Heart right ventricle (tissue), 16 donors: ENCODE measurements at regions of chr5 and their contacts with region 1.

Region 1: DNA sequence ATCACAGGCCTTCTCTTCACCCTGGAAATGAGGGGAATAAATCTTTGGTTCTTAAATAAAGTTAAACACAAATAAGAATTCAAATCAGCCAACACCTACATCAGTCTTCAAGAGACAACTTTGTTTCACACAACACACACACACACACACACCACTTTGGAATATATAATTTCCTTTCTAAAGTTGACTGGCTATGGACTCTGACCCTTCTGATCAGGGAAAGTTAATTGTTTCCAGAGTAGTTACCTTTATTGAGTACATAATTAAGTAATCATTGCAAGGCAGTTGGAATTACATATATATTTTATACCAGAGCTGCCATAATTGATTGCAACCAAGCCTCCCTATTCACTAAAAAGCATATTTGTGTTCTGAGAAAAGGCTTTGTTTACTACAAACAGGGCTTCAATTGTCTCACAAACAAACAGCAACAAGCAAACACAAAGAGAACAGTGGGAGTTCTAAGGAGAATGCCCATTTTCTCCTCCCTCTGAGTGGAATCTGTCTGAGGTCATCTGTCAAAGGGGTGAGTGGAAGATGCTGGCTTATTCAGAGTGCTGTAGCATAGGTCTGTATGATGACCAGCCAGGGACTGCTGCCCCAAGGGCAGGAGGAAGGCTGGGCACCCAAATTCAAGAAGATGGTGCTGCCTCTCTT is 136.6 kb downstream of the SEMA6A start:
- DNase-seq: no peak
- ATAC-seq: no peak
- H3K4me3 ChIP-seq: no peak overlapping the region
- H3K27ac ChIP-seq: peak overlapping the region in 1 of 10 donors; percentile 37
- H3K4me1 ChIP-seq: peaks cover 0 to 63% (median 22%) of the 10 kb centered on the region in 9 donors
- H3K27me3 ChIP-seq: no peaks in the 10 kb centered on the region
- CTCF ChIP-seq: no peak

Region 2: DNA sequence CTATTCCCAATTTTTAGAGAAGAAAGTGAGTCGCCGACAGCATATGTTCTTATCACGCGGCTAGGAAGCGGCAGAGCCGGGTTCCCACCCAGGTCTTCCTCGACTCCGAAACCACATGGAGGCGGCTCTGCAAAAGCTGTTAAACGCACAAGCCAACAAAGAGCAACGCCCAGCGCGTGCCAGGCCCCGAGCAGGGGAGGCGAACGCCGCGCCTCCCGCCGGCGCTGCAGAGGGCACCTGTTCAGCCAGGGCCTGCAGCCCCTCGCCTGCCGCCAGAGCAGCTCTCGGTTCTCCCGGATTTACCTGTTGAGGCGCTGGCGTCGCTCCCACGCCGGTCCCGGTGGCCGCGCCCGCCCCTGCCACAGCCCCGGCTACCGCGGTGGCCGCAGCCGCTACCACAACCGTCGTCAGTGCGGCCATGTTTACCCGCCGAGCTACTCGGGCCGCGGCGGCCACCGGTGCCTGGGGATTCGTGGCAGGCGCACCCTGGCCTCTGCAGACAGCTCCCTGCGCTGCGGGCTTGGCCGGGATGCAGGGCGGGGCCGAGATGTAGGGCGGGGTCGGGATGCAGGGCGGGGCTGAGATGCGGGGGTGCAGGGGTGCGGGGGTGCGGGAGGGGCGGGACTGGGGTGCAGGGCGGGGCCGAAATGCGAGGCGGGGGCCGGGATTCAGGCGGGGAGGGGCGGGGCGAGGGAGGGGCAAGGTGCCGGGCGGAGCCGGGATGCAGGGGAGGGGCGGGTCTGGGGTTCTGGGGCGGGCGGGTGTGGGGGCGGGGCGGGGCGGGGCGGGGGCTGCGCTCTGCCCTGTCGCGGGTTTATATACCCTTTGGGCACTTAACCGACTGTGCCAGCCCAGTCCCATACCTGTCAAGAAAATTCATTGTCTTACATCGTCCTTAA is 1141.7 kb before region 1 on chr5 and contains the start of gene CCDC112:
- intact Hi-C with region 1: no loop called
- DNase-seq: peak; percentile 82 to 89
- ATAC-seq: peak; percentile 88 to 95 (median 90)
- H3K4me3 ChIP-seq: peak within 1 kb of the TSS; percentile 84 to 98 (median 94)
- H3K27ac ChIP-seq: peak within 1 kb of the TSS in 9 of 10 donors; percentile 8 to 86 (median 71)
- H3K4me1 ChIP-seq: peaks cover 0 to 18% (median 8%) of the 10 kb centered on the region in 9 donors
- H3K27me3 ChIP-seq: no peaks in the 10 kb centered on the region
- CTCF ChIP-seq: no peak
- total RNA-seq, gene CCDC112: 3.3 to 7.5 (median 4.8) TPM

Region 3: DNA sequence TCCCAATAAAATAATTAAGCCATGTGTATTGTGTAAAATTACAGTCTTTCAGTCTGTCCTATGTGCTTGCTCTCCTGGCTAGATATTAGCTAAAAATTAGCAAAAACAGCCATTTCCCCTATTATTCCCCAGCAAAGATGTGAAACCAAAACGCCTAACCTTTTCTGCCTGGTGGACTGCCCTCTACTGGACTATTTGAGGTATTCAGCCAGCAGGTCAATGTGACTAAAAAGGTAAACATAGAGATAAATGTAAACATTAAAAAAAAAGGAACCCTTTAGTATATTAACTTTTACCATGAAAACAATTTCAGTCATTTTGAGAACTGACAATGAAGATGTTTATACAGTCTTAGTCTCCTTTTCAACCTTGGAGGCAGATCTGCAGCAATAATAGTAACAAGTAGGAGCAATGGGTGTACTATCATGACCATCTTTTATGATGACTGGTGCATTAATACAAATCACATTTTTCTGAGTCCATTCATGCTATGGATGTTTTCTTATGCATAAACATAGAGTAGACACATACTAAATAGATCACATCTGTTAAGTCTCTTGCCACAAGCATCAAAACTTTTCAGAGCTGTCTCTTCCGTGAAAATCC is 606.8 kb before region 1 on chr5:
- intact Hi-C with region 1: no loop called
- DNase-seq: peak in 1 of 2 donors; percentile 17
- ATAC-seq: peak in 2 of 8 donors; percentile 42 to 49
- H3K4me3 ChIP-seq: no peak overlapping the region
- H3K27ac ChIP-seq: no peak overlapping the region
- H3K4me1 ChIP-seq: peaks cover 0 to 5% (median 0%) of the 10 kb centered on the region in 9 donors
- H3K27me3 ChIP-seq: no peaks in the 10 kb centered on the region
- CTCF ChIP-seq: peak; percentile 52 to 85 (median 78)

Region 4: GRCh38 chr5:116404016-116404415 is 34.0 kb before region 1 on chr5:
- intact Hi-C with region 1: loop called in 1 of 10 experiments (anchors 5 kb)
- DNase-seq: no peak
- ATAC-seq: peak in 6 of 8 donors; percentile 74 to 88 (median 82)
- H3K4me3 ChIP-seq: no peak overlapping the region
- H3K27ac ChIP-seq: peak overlapping the region in 2 of 10 donors; percentile 18 to 34
- H3K4me1 ChIP-seq: peaks cover 0 to 22% (median 9%) of the 10 kb centered on the region in 9 donors
- H3K27me3 ChIP-seq: no peaks in the 10 kb centered on the region
- CTCF ChIP-seq: no peak

Region 5: DNA sequence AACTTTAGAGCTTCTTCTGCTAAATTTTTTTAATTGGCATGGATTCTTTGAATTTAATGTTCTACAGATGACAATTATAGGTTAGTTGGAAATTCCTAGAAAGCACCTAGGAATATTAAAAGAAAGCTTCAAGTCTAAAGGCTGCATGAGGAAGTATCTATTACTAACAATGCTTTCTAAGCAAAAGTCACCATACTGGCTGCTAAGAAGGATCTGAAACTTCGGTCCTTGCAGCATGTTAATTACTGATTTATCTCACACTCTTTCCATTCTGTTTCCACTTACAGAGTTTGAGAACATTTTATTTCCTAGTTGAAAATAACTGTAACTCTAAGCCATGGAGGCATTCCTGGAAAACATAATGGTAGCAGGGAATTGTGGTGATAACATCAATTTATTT is 128.2 kb after region 1 on chr5:
- intact Hi-C with region 1: loop called in 1 of 10 experiments (anchors 10 kb)
- DNase-seq: no peak
- ATAC-seq: no peak
- H3K4me3 ChIP-seq: no peak overlapping the region
- H3K27ac ChIP-seq: no peak overlapping the region
- H3K4me1 ChIP-seq: peaks cover 0 to 55% (median 5%) of the 10 kb centered on the region in 9 donors
- H3K27me3 ChIP-seq: peaks cover 0 to 19% (median 0%) of the 10 kb centered on the region in 7 donors
- CTCF ChIP-seq: no peak